ENCODE measurements at regions of chr12 and their contacts with region 1.

Region 1: GRCh38 chr12:62793256-62794217 is 141.4 kb downstream of the PPM1H start:
- DNase-seq: peak; percentile 94
- ATAC-seq: peak; percentile 96

Region 2: DNA sequence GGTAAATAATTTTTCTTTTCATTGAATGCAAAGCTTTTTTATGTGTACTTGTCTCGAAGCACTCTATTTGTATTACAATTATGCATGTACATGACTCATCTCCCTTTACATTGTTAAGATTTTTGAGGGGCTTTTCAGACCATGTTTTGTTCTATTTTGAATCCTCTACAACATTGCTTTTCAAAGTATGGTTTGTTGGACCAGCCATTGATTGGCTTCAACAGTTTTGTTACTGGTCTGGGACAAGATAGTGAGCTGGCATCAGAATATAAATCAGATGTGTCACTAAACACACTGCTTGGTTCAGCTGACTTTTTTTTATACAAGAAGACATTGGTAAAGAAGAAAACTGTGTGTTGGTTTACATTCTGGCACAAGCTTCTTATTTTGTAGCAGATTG is 204.6 kb before region 1 on chr12:
- intact Hi-C with region 1: loop called (anchors 5 kb)
- DNase-seq: no peak
- ATAC-seq: no peak

Region 3: DNA sequence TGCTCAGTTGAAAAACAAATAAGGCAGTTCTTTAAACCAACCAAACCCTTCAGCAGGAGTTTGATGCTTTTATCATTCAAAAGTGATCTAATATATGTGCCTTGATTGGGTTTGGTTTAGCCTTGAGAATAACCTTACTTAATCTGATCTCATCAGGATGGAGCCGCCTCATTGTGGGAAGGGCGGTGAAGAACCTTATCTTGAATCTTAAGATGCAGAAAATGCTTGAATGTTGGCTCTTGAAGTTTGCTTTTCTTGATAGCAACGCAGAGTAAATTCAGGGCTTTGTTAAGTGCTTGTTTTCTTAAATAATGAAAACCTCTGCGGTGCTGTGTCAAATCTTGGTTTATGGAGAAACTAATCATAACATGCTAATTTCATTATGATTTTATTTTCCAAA is 188.7 kb before region 1 on chr12:
- intact Hi-C with region 1: loop called (anchors 5 kb)
- DNase-seq: no peak
- ATAC-seq: no peak

Region 4: GRCh38 chr12:62995097-62995496 is 201.6 kb after region 1 on chr12:
- intact Hi-C with region 1: no loop called
- DNase-seq: no peak
- ATAC-seq: no peak

Region 5: GRCh38 chr12:63086149-63086915 is 292.8 kb after region 1 on chr12:
- intact Hi-C with region 1: no loop called
- DNase-seq: no peak
- ATAC-seq: peak; percentile 55

Measured in sciatic nerve (tissue), 2 donors.